ENCODE measurements at regions of chr4 and their contacts with region 1.

Region 1: DNA sequence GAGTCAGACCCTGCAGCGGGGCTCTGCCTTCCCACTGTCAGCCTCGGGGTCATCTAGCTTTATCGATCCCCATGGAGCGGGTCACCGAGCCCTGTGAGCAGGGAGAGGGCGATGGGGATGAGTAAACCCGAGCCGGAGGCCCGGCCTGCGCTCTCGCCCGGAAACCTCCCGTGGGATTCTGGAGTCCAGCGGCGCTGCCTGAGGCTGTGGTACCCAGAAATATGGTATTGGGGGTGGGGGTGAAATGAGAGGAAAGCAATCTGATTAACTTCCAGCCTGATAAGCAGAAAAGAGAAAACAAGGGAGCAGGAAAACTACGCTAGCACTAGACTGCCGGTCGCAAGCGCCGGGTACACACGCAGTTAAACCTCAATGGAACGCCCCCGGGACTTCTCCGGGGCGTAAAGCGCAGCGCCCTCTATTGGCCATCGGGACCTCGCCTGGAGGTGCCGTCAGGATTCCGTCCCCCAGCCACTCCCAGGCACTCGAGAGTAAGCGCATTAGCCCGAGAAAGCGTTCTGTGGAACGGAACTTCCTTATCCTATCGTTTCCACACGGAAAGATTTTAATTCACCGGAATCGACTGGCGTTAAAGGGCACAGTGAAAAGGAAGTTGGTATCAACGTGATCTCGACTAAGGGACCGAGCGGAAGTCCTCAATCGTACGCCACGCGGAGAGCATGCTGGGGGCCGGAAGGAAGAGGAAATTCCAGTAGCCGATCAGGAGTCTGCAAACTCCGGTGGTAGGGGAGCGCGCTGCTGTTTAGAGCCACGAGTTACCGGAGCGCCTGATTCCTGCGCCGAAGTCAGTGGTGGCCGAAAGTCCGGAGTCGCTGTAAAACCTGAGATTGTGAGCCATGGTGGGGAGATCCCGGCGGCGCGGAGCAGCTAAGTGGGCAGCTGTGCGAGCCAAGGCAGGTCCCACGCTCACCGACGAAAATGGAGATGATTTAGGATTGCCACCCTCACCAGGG is at the start of gene UTP3:
- DNase-seq: peak; percentile 97
- H3K4me3 Mint-ChIP-seq: peak within 1 kb of the TSS; percentile 99
- H3K27ac Mint-ChIP-seq: peak within 1 kb of the TSS; percentile 96
- H3K4me1 Mint-ChIP-seq: peaks cover 28% of the 10 kb centered on the region
- H3K27me3 Mint-ChIP-seq: peaks cover 1% of the 10 kb centered on the region
- total RNA-seq, gene UTP3: 45.9 and 47.6 TPM in 2 replicates

Region 2: GRCh38 chr4:70601422-70602039 is 86.6 kb before region 1 on chr4:
- intact Hi-C with region 1: loop called (anchors 1 kb)
- DNase-seq: peak; percentile 89
- H3K4me3 Mint-ChIP-seq: no peak overlapping the region
- H3K27ac Mint-ChIP-seq: no peak overlapping the region
- H3K4me1 Mint-ChIP-seq: no peaks in the 10 kb centered on the region
- H3K27me3 Mint-ChIP-seq: peaks cover 14% of the 10 kb centered on the region

Region 3: DNA sequence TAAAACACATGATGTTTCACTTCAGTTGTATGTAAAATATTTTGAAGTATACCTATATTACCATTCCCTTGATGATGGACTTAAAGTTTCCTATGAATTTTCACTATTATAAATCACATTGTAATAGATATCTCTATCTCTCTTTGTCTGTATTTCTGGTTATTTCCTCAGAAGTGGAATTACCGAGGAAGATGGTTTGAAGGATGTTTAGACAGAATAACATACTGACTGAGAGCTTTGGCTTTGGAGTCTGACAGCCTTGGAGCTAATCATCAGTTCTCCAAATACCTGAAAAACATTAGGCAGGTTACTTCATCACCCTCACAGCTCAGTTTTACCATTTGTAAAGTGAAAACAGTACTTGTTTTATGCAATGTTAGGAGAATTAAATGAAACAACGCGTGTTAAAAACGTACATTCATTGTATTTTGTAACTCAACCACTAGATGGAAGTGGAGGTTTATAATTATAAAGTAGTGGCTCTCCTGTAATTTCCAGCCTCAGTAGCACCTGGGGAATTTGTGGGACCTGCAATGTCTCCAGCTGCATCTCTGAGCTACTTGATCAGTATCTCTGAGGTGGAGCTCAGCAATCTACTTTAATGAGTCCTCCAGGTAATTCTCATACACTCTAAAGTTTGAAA is 36.1 kb before region 1 on chr4:
- intact Hi-C with region 1: loop called (anchors 5 kb)
- DNase-seq: peak; percentile 62
- H3K4me3 Mint-ChIP-seq: no peak overlapping the region
- H3K27ac Mint-ChIP-seq: no peak overlapping the region
- H3K4me1 Mint-ChIP-seq: peaks cover 3% of the 10 kb centered on the region
- H3K27me3 Mint-ChIP-seq: peaks cover 9% of the 10 kb centered on the region

Region 4: GRCh38 chr4:70734168-70734954 is 46.3 kb after region 1 on chr4:
- intact Hi-C with region 1: loop called (anchors 1 kb)
- DNase-seq: peak; percentile 85
- H3K4me3 Mint-ChIP-seq: peak overlapping the region; percentile 73
- H3K27ac Mint-ChIP-seq: peak overlapping the region; percentile 48
- H3K4me1 Mint-ChIP-seq: peaks cover 33% of the 10 kb centered on the region
- H3K27me3 Mint-ChIP-seq: no peaks in the 10 kb centered on the region

Region 5: DNA sequence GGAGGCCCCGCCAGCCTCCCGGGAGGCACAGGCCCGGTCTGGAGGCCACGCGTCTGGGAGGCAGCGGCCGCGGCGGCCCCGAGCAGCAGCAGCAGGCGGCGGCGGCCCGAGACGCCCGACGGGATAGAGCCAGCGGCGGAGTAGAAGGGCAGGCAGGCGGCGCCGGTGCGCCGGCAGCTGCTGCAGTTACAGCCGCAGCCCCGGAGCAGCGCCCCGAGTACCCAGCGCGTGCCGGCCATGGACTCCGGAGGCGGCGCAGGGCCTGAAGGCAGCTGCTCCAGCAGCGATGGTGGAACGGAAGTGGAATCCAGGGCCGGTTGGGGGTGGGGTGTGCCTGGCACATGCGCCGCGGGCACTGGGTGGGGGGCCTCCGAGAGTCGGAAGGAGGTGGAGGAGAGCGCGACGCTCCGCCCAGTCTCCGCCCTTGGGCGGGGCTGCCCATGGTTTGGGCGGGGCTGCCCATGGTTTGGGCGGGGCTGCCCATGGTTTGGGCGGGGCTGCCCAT is 151.5 kb after region 1 on chr4 and contains the start of gene GRSF1:
- intact Hi-C with region 1: loop called (anchors 1 kb)
- DNase-seq: peak; percentile 98
- H3K4me3 Mint-ChIP-seq: peak within 1 kb of the TSS; percentile 100
- H3K27ac Mint-ChIP-seq: peak within 1 kb of the TSS; percentile 99
- H3K4me1 Mint-ChIP-seq: peaks cover 35% of the 10 kb centered on the region
- H3K27me3 Mint-ChIP-seq: no peaks in the 10 kb centered on the region
- total RNA-seq, gene GRSF1: 122 and 124 TPM in 2 replicates

Region 6: GRCh38 chr4:70993181-70994068 is 305.3 kb after region 1 on chr4 and contains the start of gene DCK:
- intact Hi-C with region 1: loop called (anchors 1 kb)
- DNase-seq: peak; percentile 96
- H3K4me3 Mint-ChIP-seq: peak within 1 kb of the TSS; percentile 99
- H3K27ac Mint-ChIP-seq: peak within 1 kb of the TSS; percentile 94
- H3K4me1 Mint-ChIP-seq: peaks cover 45% of the 10 kb centered on the region
- H3K27me3 Mint-ChIP-seq: no peaks in the 10 kb centered on the region
- total RNA-seq, gene DCK: 35.6 and 37.0 TPM in 2 replicates

Region 7: DNA sequence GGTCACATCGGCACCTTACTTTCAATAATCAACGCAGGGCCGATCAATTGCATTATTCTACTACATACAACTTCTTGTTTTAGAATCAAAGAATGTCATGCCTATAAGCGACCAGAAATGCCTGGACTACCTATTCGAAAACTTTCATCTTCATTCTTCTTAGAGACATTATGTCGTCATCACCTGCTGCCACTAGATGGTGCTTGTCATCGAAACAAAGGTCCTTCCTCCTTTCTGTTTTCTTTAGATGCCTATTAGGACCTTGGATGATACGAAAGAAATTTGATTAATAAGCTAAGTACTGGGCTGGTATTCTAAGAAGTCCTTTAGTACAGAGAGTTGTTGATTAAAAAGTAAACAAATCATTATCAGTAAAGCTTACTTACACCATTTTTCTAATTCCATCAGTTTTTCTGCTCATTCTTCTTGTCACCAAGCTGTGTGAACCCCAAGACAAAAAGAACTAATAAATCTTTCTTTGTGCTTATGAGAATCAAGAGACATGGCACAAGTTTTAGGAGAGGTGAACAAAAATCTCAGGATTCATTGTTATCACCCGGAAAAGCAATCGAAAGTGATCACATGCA is 496.2 kb after region 1 on chr4:
- intact Hi-C with region 1: loop called (anchors 10 kb)
- DNase-seq: peak; percentile 78
- H3K4me3 Mint-ChIP-seq: no peak overlapping the region
- H3K27ac Mint-ChIP-seq: no peak overlapping the region
- H3K4me1 Mint-ChIP-seq: peaks cover 18% of the 10 kb centered on the region
- H3K27me3 Mint-ChIP-seq: peaks cover 41% of the 10 kb centered on the region